AG04450 (cell line): ENCODE measurements at regions of chr9 and their contacts with region 1.

Region 1: GRCh38 chr9:125706661-125707471 is at the start of gene MAPKAP1:
- DNase-seq: peak; percentile 87
- H3K4me3 ChIP-seq: peak within 1 kb of the TSS; percentile 81
- H3K27ac ChIP-seq: peak within 1 kb of the TSS; percentile 52
- H3K27me3 ChIP-seq: no peaks in the 10 kb centered on the region
- CTCF ChIP-seq: no peak
- polyA plus RNA-seq, gene MAPKAP1: 128 and 140 TPM in 2 replicates

Region 2: DNA sequence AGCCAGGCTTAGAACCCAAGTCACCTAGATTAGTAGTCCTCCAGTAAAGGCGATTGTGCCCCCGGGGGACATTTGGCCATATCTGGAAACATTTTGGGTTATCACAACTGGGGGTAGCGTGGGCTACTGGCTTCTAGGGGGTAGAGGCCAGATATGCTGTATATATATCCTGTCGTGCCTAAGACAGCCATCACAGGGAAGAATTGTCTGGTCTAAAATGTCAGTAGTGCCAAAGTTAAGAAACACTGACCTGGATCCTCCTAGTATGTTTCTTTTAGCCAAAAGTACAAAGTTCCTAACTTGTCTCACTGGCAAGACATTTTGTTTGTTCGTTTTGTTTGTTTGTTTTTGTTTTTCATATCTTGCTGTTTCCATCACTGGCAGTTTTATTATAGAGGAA is 492.7 kb before region 1 on chr9:
- CTCF ChIA-PET with region 1: no interaction called
- POLR2A ChIA-PET with region 1: no interaction called
- DNase-seq: no peak
- H3K4me3 ChIP-seq: no peak overlapping the region
- H3K27ac ChIP-seq: no peak overlapping the region
- H3K27me3 ChIP-seq: no peaks in the 10 kb centered on the region
- CTCF ChIP-seq: no peak

Region 3: GRCh38 chr9:125694478-125694877 is 12.4 kb before region 1 on chr9:
- CTCF ChIA-PET with region 1: no interaction called
- POLR2A ChIA-PET with region 1: interaction called, 12 read pairs
- DNase-seq: no peak
- H3K4me3 ChIP-seq: no peak overlapping the region
- H3K27ac ChIP-seq: no peak overlapping the region
- H3K27me3 ChIP-seq: no peaks in the 10 kb centered on the region
- CTCF ChIP-seq: no peak